SK-N-SH (cell line): ENCODE measurements at regions of chr4 and their contacts with region 1.

Region 1: DNA sequence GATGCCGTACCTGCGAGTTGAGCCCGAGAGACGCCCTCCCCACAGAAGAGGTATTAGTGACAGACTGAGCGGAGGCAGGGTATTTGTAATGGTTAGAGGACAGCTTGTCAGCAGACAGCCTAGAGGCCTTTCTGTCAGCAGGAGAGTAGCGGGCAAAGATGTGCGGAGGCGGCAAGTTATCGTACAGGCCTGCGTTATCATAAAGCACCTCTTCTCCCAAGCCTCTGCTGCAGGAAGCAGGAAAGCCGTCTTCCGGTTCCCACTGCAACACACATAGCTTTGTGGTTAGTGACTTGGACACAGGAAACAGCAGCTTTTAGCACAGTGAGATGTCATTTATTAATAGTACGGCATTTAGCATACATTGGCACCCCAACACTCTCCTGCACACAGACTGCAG is 158.3 kb downstream of the AFAP1 start:
- DNase-seq: no peak
- H3K4me3 ChIP-seq: no peak overlapping the region
- H3K27ac ChIP-seq: peak overlapping the region; percentile 53 to 86
- H3K4me1 ChIP-seq: peaks cover 39 to 64% of the 10 kb centered on the region in 2 experiments
- H3K27me3 ChIP-seq: no peaks in the 10 kb centered on the region
- CTCF ChIP-seq: no peak
- EP300 ChIP-seq: no peak
- RAD21 ChIP-seq: no peak

Region 2: DNA sequence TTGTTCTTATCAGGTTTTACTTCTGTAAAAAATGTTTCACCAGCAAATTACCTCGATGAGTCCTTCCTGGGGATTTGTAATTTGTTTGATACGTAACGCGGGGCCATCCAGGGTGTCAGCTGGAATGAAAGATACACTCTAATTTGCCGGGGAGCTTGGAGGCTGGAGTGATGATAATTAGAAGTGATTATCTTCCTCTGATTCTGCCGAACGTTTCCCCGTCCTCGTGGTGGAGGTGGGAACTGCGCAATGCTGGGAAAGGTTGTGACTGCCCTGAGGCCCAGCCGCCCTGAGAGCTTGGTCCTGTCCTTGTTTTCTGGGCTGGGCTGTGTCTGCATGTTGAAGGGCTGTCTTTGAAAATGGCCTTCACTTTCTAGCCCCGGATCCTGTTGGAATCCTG is 541.1 kb before region 1 on chr4:
- CTCF ChIA-PET with region 1: no interaction called
- POLR2A ChIA-PET with region 1: no interaction called
- DNase-seq: peak; percentile 57
- H3K4me3 ChIP-seq: no peak overlapping the region
- H3K27ac ChIP-seq: no peak overlapping the region
- H3K4me1 ChIP-seq: no peaks in the 10 kb centered on the region; a peak in 1 of 4 replicates
- H3K27me3 ChIP-seq: no peaks in the 10 kb centered on the region
- CTCF ChIP-seq: 0 out of 2 replicates have a peak, but pooled peaks have one; percentile 14
- EP300 ChIP-seq: no peak
- RAD21 ChIP-seq: no peak

Region 3: GRCh38 chr4:7719354-7720174 is 61.8 kb before region 1 on chr4:
- CTCF ChIA-PET with region 1: no interaction called
- POLR2A ChIA-PET with region 1: no interaction called
- DNase-seq: peak; percentile 96
- H3K4me3 ChIP-seq: peak overlapping the region in 1 of 2 experiments; percentile 15; a peak in 1 of 4 replicates
- H3K27ac ChIP-seq: no peak overlapping the region
- H3K4me1 ChIP-seq: no peaks in the 10 kb centered on the region; a peak in 1 of 4 replicates
- H3K27me3 ChIP-seq: no peaks in the 10 kb centered on the region
- CTCF ChIP-seq: peak; percentile 90
- EP300 ChIP-seq: no peak
- RAD21 ChIP-seq: peak; percentile 84

Region 4: DNA sequence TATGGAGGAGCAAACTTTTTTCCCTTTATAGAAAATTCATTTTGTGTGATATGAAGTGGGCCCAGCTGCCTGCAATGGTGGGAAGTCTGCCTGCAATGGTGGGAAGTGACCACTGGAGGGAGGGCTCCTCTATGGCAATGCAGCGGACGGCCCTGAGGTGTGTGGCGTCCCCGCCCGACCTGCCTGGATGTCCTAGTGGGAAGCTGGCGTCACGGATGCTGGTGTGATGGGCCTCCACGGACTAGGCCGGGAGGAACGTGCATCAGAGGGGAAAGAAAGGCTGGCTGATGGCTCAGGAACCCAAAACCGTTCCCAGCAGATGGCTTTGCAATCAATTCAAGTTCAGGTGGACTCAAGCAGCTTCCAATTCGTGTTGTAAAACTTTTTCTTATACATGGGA is 19.6 kb before region 1 on chr4:
- CTCF ChIA-PET with region 1: interaction called, 31 read pairs
- POLR2A ChIA-PET with region 1: no interaction called
- DNase-seq: peak; percentile 91
- H3K4me3 ChIP-seq: no peak overlapping the region; a peak in 1 of 4 replicates
- H3K27ac ChIP-seq: no peak overlapping the region; a peak in 1 of 4 replicates
- H3K4me1 ChIP-seq: peaks cover 0 to 4% of the 10 kb centered on the region in 2 experiments; a peak in 1 of 4 replicates
- H3K27me3 ChIP-seq: no peaks in the 10 kb centered on the region
- CTCF ChIP-seq: peak; percentile 72
- EP300 ChIP-seq: no peak
- RAD21 ChIP-seq: peak; percentile 73